ENCODE measurements at regions of chr21 and their contacts with region 1.

Region 1: GRCh38 chr21:15826147-15826780 is 96.5 kb downstream of the USP25 start:
- DNase-seq: no peak
- ATAC-seq: peak; percentile 61 to 63
- H3K4me3 ChIP-seq: no peak overlapping the region
- H3K27ac ChIP-seq: no peak overlapping the region
- H3K4me1 ChIP-seq: no peaks in the 10 kb centered on the region
- H3K27me3 ChIP-seq: no peaks in the 10 kb centered on the region

Region 2: DNA sequence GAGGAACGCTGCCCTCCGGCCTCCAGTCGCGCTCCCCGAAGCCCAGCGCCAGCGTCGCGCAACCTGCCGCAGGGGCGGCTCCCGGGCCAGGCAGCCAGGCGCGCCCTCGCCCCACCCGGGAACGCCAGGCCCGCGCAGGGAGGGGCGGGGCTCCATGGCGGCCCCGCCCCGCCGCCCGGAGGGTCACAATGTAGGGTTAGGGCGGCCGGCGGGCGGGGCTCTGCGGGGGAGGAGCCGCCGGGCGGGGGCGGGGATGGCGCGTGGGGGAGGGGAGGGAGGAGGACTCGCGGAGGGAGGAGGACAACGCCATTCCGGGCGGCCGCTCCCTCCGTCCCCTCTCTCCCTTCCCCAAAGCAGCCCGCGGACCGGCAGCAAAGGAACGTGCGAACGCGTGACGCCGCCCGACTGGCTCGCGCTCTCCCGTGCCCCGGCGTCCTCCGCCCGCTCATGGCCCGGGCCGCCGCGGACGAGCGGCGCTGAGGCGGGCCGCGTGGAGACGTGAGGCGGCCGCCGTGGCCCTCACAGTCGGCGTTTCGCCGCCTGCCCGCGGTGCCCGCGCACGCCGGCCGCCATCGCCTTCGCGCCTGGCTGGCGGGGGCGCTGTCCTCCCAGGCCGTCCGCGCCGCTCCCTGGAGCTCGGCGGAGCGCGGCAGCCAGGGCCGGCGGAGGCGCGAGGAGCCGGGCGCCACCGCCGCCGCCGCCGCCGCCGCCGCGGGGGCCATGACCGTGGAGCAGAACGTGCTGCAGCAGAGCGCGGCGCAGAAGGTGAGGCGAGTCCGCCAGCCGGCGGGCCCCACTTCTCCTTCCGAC is 96.4 kb before region 1 on chr21 and contains the start of gene USP25:
- intact Hi-C with region 1: loop called in 1 of 4 experiments (anchors 10 kb)
- DNase-seq: peak; percentile 92 to 98 (median 97)
- ATAC-seq: peak; percentile 99
- H3K4me3 ChIP-seq: peak within 1 kb of the TSS; percentile 92
- H3K27ac ChIP-seq: peak within 1 kb of the TSS; percentile 98
- H3K4me1 ChIP-seq: peaks cover 2% of the 10 kb centered on the region
- H3K27me3 ChIP-seq: no peaks in the 10 kb centered on the region
- total RNA-seq, gene USP25: 45.4 to 60.6 (median 50.1) TPM

Region 3: DNA sequence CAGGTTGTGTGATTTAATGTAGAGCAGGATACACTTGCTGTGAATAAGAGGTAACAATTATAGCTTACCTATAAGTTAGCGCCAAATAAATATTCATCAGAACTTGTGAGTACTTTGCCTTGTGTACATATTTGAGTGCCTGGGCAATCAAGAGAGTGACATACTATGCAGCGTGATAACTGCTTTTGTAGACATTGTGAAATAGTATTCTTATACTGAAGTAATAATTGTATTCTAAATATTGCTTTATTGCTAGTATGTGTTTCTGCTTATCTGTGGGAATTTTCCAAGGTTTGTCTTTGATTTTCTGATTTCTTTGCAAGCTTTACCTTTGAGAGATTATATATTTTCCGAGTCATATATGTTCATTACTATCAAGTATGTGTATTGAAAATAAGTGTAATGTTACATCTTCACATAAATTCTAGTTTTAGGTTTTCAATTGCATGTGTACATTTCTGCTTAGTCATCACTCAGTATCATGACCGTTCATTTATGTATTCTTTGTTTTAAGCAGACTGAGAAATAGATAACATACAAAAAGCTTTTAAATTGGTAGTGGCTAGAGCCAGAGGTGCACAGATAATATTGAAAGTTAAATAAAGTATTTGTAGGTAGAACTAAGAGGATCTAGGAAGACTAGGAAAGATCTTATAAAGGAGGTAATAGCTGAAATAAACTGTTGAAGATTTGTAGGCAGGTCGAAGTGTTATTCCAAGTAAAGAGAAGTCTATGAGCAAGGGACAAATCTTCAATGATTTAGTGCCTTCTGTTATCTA is 77.0 kb before region 1 on chr21:
- intact Hi-C with region 1: no loop called
- DNase-seq: no peak
- ATAC-seq: no peak
- H3K4me3 ChIP-seq: no peak overlapping the region
- H3K27ac ChIP-seq: no peak overlapping the region
- H3K4me1 ChIP-seq: peaks cover 10% of the 10 kb centered on the region
- H3K27me3 ChIP-seq: no peaks in the 10 kb centered on the region

Region 4: DNA sequence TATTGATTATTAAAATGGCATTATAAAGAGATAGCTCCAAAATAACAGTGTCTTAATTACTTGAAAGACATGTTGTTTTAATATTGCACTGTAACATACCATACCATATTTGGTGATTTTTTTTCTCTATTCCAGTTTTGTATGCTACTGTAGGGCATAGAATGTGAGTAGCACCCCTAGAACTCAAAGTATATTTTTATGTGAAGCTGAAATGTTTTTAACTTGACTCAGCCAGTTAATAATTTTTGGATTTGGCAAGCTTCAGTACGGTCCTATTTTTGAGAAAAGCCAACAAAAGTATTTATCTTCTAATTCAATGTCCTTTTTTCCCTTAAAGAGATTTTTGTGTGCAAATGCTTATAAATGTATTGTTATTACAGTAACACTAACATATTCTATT is 497.3 kb after region 1 on chr21:
- intact Hi-C with region 1: no loop called
- DNase-seq: no peak
- ATAC-seq: no peak
- H3K4me3 ChIP-seq: no peak overlapping the region
- H3K27ac ChIP-seq: no peak overlapping the region
- H3K4me1 ChIP-seq: no peaks in the 10 kb centered on the region
- H3K27me3 ChIP-seq: no peaks in the 10 kb centered on the region